ENCODE measurements at regions of chr3 and their contacts with region 1.

Region 1: GRCh38 chr3:49856181-49857005 is at the start of gene TRAIP:
- DNase-seq: peak; percentile 93
- H3K4me3 Mint-ChIP-seq: peak within 1 kb of the TSS; percentile 90
- H3K27ac Mint-ChIP-seq: peak within 1 kb of the TSS; percentile 87
- H3K4me1 Mint-ChIP-seq: peaks cover 13% of the 10 kb centered on the region
- H3K27me3 Mint-ChIP-seq: peaks cover 13% of the 10 kb centered on the region
- CTCF ChIP-seq: no peak
- total RNA-seq, gene TRAIP: 28.2 and 29.7 TPM in 2 replicates

Region 2: GRCh38 chr3:49899815-49900214 is 43.4 kb after region 1 on chr3:
- CTCF ChIA-PET with region 1: no interaction called
- intact Hi-C with region 1: loop called (anchors 2 kb)
- DNase-seq: no peak
- H3K4me3 Mint-ChIP-seq: peak overlapping the region; percentile 87
- H3K27ac Mint-ChIP-seq: peak overlapping the region; percentile 96
- H3K4me1 Mint-ChIP-seq: no peaks in the 10 kb centered on the region
- H3K27me3 Mint-ChIP-seq: no peaks in the 10 kb centered on the region
- CTCF ChIP-seq: peak; percentile 23

Measured in Calu3 (cell line).